ENCODE measurements at regions of chr12 and their contacts with region 1.

Region 1: DNA sequence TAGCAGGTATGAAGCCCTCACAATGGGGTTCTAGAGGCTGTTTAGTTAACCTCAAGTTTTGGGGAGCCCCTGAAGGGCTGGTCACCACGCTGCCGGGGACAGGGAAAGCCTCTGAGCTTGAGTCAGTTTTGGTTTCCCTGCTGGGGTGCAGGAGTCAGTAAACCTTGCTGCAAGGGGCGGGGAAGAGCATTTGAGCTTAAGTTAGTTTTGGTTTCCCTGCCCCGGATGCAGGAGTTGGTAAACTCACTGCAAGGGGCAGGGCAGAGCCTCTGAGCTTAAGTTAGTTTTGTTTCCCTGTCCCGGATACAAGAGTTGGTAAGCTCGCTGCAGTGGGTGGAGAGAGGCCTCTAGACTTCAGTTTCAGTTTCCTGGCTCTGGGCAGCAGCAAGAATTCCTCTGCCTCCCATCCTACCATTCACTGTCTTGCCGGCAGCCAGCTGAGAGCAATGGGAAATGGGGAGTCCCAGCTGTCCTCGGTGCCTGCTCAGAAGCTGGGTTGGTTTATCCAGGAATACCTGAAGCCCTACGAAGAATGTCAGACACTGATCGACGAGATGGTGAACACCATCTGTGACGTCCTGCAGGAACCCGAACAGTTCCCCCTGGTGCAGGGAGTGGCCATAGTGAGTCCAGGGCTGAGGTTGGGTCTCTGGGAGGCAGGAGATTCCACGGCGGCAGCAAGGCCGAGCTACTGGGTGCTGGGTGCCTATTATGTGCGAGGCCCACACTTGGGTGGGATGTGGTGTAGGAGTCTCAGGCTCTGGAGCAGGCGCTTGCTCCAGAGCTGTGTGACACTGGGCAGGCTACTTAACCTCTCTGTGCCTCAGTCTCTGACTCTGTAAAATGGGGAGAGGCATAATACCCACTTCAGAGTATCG is at the start of gene OAS2:
- DNase-seq: peak; percentile 93
- H3K4me3 Mint-ChIP-seq: peak within 1 kb of the TSS; percentile 81
- H3K27ac Mint-ChIP-seq: peak within 1 kb of the TSS; percentile 100
- H3K4me1 Mint-ChIP-seq: peaks cover 36% of the 10 kb centered on the region
- H3K27me3 Mint-ChIP-seq: no peaks in the 10 kb centered on the region
- total RNA-seq, gene OAS2: 191 to 196 TPM

Region 2: GRCh38 chr12:112125250-112125999 is 853.0 kb before region 1 on chr12 and contains the start of gene TRAFD1:
- CTCF ChIA-PET with region 1: no interaction called
- intact Hi-C with region 1: loop called (anchors 10 kb)
- DNase-seq: peak; percentile 98
- H3K4me3 Mint-ChIP-seq: peak within 1 kb of the TSS; percentile 72
- H3K27ac Mint-ChIP-seq: peak within 1 kb of the TSS; percentile 75
- H3K4me1 Mint-ChIP-seq: peaks cover 42% of the 10 kb centered on the region
- H3K27me3 Mint-ChIP-seq: no peaks in the 10 kb centered on the region
- total RNA-seq, gene TRAFD1: 49.6 to 55.7 TPM

Region 3: DNA sequence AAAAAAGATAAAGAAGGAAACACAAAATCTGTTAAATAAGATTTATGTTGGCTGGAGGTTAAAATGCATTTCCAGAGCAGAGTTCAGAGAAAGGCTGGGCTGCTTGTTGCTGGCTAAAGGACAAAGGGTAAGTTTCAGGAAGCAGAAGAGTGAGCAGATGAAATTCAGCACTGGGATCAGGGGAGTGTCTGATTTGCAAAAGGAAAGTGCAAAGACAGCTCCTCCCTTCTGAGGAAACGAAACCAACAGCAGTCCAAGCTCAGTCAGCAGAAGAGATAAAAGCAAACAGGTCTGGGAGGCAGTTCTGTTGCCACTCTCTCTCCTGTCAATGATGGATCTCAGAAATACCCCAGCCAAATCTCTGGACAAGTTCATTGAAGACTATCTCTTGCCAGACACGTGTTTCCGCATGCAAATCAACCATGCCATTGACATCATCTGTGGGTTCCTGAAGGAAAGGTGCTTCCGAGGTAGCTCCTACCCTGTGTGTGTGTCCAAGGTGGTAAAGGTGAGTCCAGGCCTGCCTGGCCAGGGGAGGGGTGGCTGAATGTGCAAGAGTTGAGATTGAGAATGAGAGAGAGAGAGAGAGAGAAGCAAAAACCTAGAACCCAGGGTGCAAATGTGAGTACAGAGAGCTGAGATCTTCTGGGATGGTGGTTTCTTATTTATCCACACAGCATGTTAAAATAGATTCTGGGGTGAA is 71.5 kb before region 1 on chr12 and contains the start of gene OAS1:
- CTCF ChIA-PET with region 1: interaction called, 11 read pairs
- intact Hi-C with region 1: loop called (anchors 1 kb)
- DNase-seq: peak; percentile 59
- H3K4me3 Mint-ChIP-seq: peak within 1 kb of the TSS; percentile 87
- H3K27ac Mint-ChIP-seq: peak within 1 kb of the TSS; percentile 81
- H3K4me1 Mint-ChIP-seq: peaks cover 62% of the 10 kb centered on the region
- H3K27me3 Mint-ChIP-seq: no peaks in the 10 kb centered on the region
- total RNA-seq, gene OAS1: 41.6 to 41.7 TPM

Region 4: DNA sequence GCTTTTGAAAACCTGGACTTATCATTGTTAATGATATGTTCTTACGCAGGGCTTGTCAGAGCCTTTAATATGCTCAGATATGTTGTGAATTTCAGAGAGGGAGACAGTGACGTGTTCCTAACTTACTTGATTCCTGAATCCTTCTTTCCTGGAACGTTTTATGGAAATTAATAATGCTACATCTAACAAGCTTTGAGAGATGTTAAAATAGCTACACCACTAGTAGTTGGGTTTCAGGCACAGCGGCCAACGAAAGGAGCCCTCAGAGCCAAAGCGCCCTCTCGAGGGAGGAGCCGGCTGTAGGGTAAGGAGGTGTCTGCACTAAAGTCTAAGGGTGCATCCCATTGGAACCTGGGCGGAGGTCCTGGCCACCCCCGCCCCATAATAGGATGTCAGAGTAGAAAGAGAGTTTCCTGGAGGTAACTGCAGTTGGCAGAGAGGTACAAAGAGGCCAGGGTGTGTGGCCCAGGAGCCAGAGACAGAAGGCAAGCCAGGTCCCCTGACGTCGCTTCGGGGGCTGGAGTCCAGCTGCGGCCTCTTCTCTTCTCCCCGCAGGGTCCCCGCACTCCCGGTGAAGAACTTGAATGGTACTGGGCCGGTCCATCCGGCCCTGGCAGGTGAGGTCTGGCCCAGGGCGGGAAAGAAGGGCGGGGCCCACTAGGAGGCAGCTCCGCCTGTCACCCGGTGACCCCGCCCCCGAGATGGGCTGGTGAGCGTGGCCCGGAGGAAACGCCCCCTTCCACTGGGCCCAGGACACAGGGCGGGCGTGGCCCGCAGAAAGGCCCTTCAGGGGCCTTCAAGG is 114.4 kb after region 1 on chr12:
- CTCF ChIA-PET with region 1: interaction called, 3 read pairs
- intact Hi-C with region 1: loop called (anchors 2 kb)
- DNase-seq: peak; percentile 30
- H3K4me3 Mint-ChIP-seq: no peak overlapping the region
- H3K27ac Mint-ChIP-seq: no peak overlapping the region
- H3K4me1 Mint-ChIP-seq: peaks cover 53% of the 10 kb centered on the region
- H3K27me3 Mint-ChIP-seq: no peaks in the 10 kb centered on the region

Region 5: GRCh38 chr12:113221181-113221997 is 243.0 kb after region 1 on chr12 and contains the start of gene TPCN1:
- CTCF ChIA-PET with region 1: no interaction called
- intact Hi-C with region 1: loop called (anchors 5 kb)
- DNase-seq: peak; percentile 100
- H3K4me3 Mint-ChIP-seq: peak within 1 kb of the TSS; percentile 96
- H3K27ac Mint-ChIP-seq: peak within 1 kb of the TSS; percentile 92
- H3K4me1 Mint-ChIP-seq: peaks cover 40% of the 10 kb centered on the region
- H3K27me3 Mint-ChIP-seq: no peaks in the 10 kb centered on the region
- total RNA-seq, gene TPCN1: 47.3 to 49.2 TPM